AG04450 (cell line): ENCODE measurements at regions of chr10 and their contacts with region 1.

Region 1: GRCh38 chr10:114304017-114304570 is 65.0 kb downstream of the VWA2 start:
- DNase-seq: peak; percentile 73
- H3K4me3 ChIP-seq: peak overlapping the region; percentile 44
- H3K27ac ChIP-seq: peak overlapping the region; percentile 57
- H3K27me3 ChIP-seq: peaks cover 14% of the 10 kb centered on the region
- CTCF ChIP-seq: peak; percentile 85

Region 2: DNA sequence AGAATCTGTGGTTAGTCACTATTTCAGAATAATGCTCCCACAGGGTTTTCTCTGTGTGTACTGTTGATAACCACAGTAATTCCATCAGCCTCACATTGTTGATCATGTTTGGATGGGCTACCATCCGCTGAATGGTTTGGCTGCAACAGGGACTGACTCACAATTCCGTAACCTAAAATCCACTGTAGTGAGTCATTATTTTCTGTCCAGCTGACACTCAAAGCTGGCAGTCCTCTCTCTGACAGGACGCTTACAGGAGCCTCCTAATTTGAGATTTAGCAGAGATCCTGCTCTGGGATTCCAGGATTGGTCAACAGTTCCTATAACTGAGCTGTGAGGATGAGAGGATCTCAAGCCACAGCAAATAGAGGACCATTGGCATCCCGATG is 32.3 kb before region 1 on chr10:
- CTCF ChIA-PET with region 1: interaction called, 10 read pairs
- POLR2A ChIA-PET with region 1: interaction called, 7 read pairs
- DNase-seq: peak; percentile 76
- H3K4me3 ChIP-seq: no peak overlapping the region
- H3K27ac ChIP-seq: no peak overlapping the region
- H3K27me3 ChIP-seq: peaks cover 2% of the 10 kb centered on the region
- CTCF ChIP-seq: no peak

Region 3: DNA sequence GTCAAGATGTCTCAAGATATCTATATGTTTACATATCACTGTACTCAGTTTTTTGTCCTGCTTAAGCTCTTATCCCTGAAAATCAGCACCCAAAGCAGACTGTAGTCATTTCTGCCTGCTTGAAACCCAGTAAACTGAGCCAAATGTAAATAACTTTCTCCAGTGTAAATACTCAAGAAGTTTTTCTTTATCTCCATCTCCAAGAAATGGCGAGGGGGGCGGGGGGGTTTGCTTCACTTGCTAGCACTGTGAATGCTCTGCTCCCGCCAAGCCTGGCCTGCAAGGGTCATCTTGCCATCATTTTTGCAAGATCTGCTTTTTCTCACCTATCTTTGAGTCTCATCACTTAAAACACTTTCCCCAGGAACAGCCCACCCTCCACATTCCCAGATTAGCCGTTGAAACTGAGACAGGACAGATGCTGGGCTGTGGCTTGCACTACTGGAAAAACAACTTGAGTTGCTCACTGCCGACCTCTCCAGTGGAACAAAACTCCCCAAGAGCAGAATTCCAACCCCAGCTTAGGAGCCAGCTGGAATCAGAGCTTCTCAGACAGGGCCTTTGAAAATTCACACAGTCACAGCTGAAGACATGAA is 45.6 kb after region 1 on chr10:
- CTCF ChIA-PET with region 1: no interaction called
- POLR2A ChIA-PET with region 1: no interaction called
- DNase-seq: no peak
- H3K4me3 ChIP-seq: no peak overlapping the region
- H3K27ac ChIP-seq: no peak overlapping the region
- H3K27me3 ChIP-seq: peaks cover 33% of the 10 kb centered on the region
- CTCF ChIP-seq: no peak

Region 4: GRCh38 chr10:114432566-114433093 is 128.5 kb after region 1 on chr10:
- CTCF ChIA-PET with region 1: interaction called, 24 read pairs
- POLR2A ChIA-PET with region 1: no interaction called
- DNase-seq: no peak
- H3K4me3 ChIP-seq: no peak overlapping the region
- H3K27ac ChIP-seq: no peak overlapping the region
- H3K27me3 ChIP-seq: peaks cover 7% of the 10 kb centered on the region
- CTCF ChIP-seq: no peak

Region 5: GRCh38 chr10:114437456-114438292 is 133.6 kb after region 1 on chr10:
- CTCF ChIA-PET with region 1: interaction called, 24 read pairs
- POLR2A ChIA-PET with region 1: no interaction called
- DNase-seq: no peak
- H3K4me3 ChIP-seq: no peak overlapping the region
- H3K27ac ChIP-seq: no peak overlapping the region
- H3K27me3 ChIP-seq: no peaks in the 10 kb centered on the region
- CTCF ChIP-seq: peak; percentile 57

Region 6: GRCh38 chr10:114458955-114459354 is 154.9 kb after region 1 on chr10:
- CTCF ChIA-PET with region 1: interaction called, 14 read pairs
- POLR2A ChIA-PET with region 1: no interaction called
- DNase-seq: no peak
- H3K4me3 ChIP-seq: no peak overlapping the region
- H3K27ac ChIP-seq: no peak overlapping the region
- H3K27me3 ChIP-seq: no peaks in the 10 kb centered on the region
- CTCF ChIP-seq: peak; percentile 20; the same call in 1 of the 2 replicates

Region 7: GRCh38 chr10:114541081-114541796 is 237.1 kb after region 1 on chr10:
- CTCF ChIA-PET with region 1: interaction called, 13 read pairs
- POLR2A ChIA-PET with region 1: no interaction called
- DNase-seq: peak; percentile 80
- H3K4me3 ChIP-seq: no peak overlapping the region
- H3K27ac ChIP-seq: no peak overlapping the region
- H3K27me3 ChIP-seq: peaks cover 53% of the 10 kb centered on the region
- CTCF ChIP-seq: no peak

Region 8: DNA sequence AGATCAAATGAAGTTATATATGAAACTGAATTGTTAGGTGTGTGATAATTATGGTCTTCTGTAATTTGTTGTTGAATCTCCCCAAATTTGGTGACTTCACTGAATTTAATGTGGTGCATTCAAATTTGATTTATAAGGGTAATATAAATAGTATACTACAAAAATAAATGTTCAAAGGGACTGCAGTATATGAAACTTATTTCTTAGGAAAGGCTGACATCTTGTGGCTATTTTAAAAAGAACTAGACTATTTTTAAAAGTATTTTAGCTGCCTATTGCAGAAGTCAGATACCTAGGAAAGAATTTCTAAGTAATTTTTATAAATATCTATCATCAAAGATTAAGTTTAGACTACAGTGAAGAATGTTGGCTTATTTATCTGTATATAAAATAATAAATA is 825.7 kb after region 1 on chr10:
- CTCF ChIA-PET with region 1: interaction called, 27 read pairs
- POLR2A ChIA-PET with region 1: no interaction called
- DNase-seq: peak; percentile 0
- H3K4me3 ChIP-seq: no peak overlapping the region
- H3K27ac ChIP-seq: no peak overlapping the region
- H3K27me3 ChIP-seq: no peaks in the 10 kb centered on the region
- CTCF ChIP-seq: peak; percentile 18; the same call in 1 of the 2 replicates